K562 (cell line): ENCODE measurements at regions of chr1 and their contacts with region 1.

Region 1: GRCh38 chr1:53061859-53062707 is at the start of gene PODN:
- DNase-seq: peak in 2 of 4 experiments; percentile 45 to 54
- ATAC-seq: no peak
- H3K4me3 ChIP-seq: no peak within 1 kb of the TSS
- H3K27ac ChIP-seq: no peak within 1 kb of the TSS
- H3K4me1 ChIP-seq: peaks cover 0 to 22% of the 10 kb centered on the region in 2 experiments; a peak in 2 of 5 replicates
- H3K27me3 ChIP-seq: peaks cover 37 to 51% of the 10 kb centered on the region in 2 experiments
- CTCF ChIP-seq: no peak
- EP300 ChIP-seq: no peak
- POLR2A ChIP-seq: no peak
- RAD21 ChIP-seq: no peak
- polyA plus RNA-seq, gene PODN: not detected

Region 2: GRCh38 chr1:53025034-53025768 is 36.9 kb before region 1 on chr1:
- CTCF ChIA-PET with region 1: no interaction called
- POLR2A ChIA-PET with region 1: no interaction called
- in situ Hi-C with region 1: no loop called
- intact Hi-C with region 1: no loop called
- DNase-seq: peak in 1 of 4 experiments; percentile 22
- ATAC-seq: no peak; the same call in 2 of the 3 replicates
- H3K4me3 ChIP-seq: no peak overlapping the region
- H3K27ac ChIP-seq: no peak overlapping the region
- H3K4me1 ChIP-seq: peaks cover 4 to 5% of the 10 kb centered on the region in 2 experiments; a peak in 4 of 5 replicates
- H3K27me3 ChIP-seq: no peaks in the 10 kb centered on the region
- CTCF ChIP-seq: no peak
- EP300 ChIP-seq: no peak
- POLR2A ChIP-seq: no peak
- RAD21 ChIP-seq: no peak

Region 3: GRCh38 chr1:53047737-53048732 is 14.0 kb before region 1 on chr1:
- CTCF ChIA-PET with region 1: no interaction called
- POLR2A ChIA-PET with region 1: interaction called, 12 read pairs
- in situ Hi-C with region 1: no loop called
- intact Hi-C with region 1: no loop called
- DNase-seq: peak in 2 of 4 experiments; percentile 64 to 74
- ATAC-seq: peak; percentile 84
- H3K4me3 ChIP-seq: no peak overlapping the region
- H3K27ac ChIP-seq: peak overlapping the region; percentile 42; the same call in 2 of the 3 replicates
- H3K4me1 ChIP-seq: peaks cover 10 to 32% of the 10 kb centered on the region in 2 experiments
- H3K27me3 ChIP-seq: no peaks in the 10 kb centered on the region
- CTCF ChIP-seq: no peak
- EP300 ChIP-seq: peak; percentile 38; the same call in 1 of the 2 replicates
- POLR2A ChIP-seq: no peak
- RAD21 ChIP-seq: no peak

Region 4: GRCh38 chr1:53108646-53109580 is 46.8 kb after region 1 on chr1:
- CTCF ChIA-PET with region 1: no interaction called
- POLR2A ChIA-PET with region 1: no interaction called
- in situ Hi-C with region 1: no loop called
- intact Hi-C with region 1: loop called (anchors 1 kb)
- DNase-seq: no peak
- ATAC-seq: no peak
- H3K4me3 ChIP-seq: no peak overlapping the region
- H3K27ac ChIP-seq: no peak overlapping the region
- H3K4me1 ChIP-seq: peaks cover 0 to 11% of the 10 kb centered on the region in 2 experiments; a peak in 2 of 5 replicates
- H3K27me3 ChIP-seq: peaks cover 31 to 74% of the 10 kb centered on the region in 2 experiments
- CTCF ChIP-seq: no peak
- EP300 ChIP-seq: no peak
- POLR2A ChIP-seq: no peak
- RAD21 ChIP-seq: no peak